ENCODE measurements at regions of chr22 and their contacts with region 1.

Region 1: DNA sequence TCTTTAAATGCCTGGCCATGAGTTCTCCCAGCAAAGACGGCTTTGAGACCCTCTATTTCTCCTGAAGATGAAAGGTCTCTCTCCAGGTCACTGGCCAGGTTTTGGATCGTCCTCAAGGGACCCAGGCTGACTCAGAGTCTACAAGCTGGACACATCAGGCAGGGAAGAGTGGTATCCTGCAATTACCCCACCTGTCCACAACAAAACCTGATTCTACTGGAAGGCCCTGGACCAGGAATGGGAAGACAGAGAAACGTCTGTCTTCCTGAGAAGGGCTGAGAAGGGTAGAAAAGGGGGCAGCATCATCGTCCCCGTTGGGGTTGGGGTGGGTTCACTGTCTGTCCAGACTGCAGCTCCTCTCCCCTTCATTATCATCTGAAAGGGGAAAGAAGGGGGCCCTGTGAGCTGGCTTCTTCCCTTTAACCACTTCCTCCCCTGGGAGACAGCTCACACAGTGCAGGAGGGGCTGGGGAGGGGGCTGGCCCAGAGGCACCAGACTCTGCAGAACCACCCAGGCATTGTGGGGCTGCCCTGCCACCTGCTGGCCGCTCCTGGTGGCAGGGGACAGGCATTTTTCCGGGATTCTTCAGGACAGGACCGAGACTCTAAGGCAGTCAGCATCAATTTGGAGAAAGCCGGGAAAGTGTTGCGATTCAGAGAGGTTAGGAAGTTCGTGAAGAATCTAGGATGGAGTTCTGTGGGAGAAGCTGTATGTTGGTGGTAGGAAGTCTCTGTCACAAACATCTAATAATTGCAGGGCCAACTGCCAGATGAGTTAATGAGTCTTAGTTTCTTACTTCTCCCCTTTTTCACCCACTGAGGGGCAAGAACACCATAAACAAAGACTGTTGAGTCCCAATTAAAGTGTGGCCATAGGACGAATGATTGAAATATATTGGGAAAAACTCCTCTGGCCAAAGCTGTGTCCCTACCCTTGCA is 57.6 kb downstream of the SYN3 start:
- DNase-seq: peak; percentile 89
- ATAC-seq: peak; percentile 98
- H3K4me3 Mint-ChIP-seq: no peak overlapping the region
- H3K27ac Mint-ChIP-seq: peak overlapping the region; percentile 58; the same call in 1 of the 2 replicates
- H3K4me1 Mint-ChIP-seq: peaks cover 28% of the 10 kb centered on the region
- H3K27me3 Mint-ChIP-seq: no peaks in the 10 kb centered on the region
- CTCF ChIP-seq: peak; percentile 71; the same call in 1 of the 2 replicates

Region 2: GRCh38 chr22:32901613-32902324 is 98.8 kb before region 1 on chr22:
- CTCF ChIA-PET with region 1: interaction called, 14 read pairs
- POLR2A ChIA-PET with region 1: no interaction called
- DNase-seq: no peak
- ATAC-seq: 0 out of 2 replicates have a peak, but pooled peaks have one; percentile 24
- H3K4me3 Mint-ChIP-seq: no peak overlapping the region
- H3K27ac Mint-ChIP-seq: no peak overlapping the region
- H3K4me1 Mint-ChIP-seq: no peaks in the 10 kb centered on the region
- H3K27me3 Mint-ChIP-seq: 0 out of 2 replicates have a peak, but pooled peaks cover 2% of the 10 kb centered on the region
- CTCF ChIP-seq: no peak

Region 3: DNA sequence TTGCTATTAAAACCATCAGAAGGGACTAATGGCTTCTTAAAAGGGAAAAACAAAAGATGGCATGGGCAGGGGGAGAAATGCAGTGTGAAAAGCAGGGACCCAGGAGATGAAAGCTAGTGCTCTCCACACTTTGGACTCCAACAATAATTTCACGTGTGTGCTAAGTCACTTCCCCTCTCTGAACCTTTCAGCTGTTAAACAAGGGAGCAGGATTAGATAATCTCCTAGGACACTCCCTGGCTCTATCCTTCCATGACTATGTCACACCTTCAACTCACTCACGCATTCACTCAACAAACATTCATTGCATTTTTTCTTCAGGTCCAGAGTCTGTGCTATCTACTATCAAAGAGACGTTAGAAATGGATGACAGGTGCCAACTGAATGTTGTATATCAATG is 31.1 kb before region 1 on chr22:
- CTCF ChIA-PET with region 1: no interaction called
- POLR2A ChIA-PET with region 1: no interaction called
- DNase-seq: no peak
- ATAC-seq: no peak
- H3K4me3 Mint-ChIP-seq: no peak overlapping the region
- H3K27ac Mint-ChIP-seq: no peak overlapping the region
- H3K4me1 Mint-ChIP-seq: peaks cover 8% of the 10 kb centered on the region
- H3K27me3 Mint-ChIP-seq: no peaks in the 10 kb centered on the region
- CTCF ChIP-seq: no peak